HAP-1 (cell line): ENCODE measurements at regions of chr12 and their contacts with region 1.

Region 1: GRCh38 chr12:130871286-130872178 is at the start of gene RAN:
- DNase-seq: peak; percentile 87 to 93
- H3K4me3 ChIP-seq: peak within 1 kb of the TSS; percentile 63
- H3K4me1 ChIP-seq: peaks cover 25% of the 10 kb centered on the region
- H3K27me3 ChIP-seq: no peaks in the 10 kb centered on the region

Region 2: GRCh38 chr12:130537052-130537451 is 334.5 kb before region 1 on chr12:
- in situ Hi-C with region 1: no loop called
- DNase-seq: no peak
- H3K4me3 ChIP-seq: no peak overlapping the region
- H3K4me1 ChIP-seq: no peaks in the 10 kb centered on the region
- H3K27me3 ChIP-seq: no peaks in the 10 kb centered on the region

Region 3: DNA sequence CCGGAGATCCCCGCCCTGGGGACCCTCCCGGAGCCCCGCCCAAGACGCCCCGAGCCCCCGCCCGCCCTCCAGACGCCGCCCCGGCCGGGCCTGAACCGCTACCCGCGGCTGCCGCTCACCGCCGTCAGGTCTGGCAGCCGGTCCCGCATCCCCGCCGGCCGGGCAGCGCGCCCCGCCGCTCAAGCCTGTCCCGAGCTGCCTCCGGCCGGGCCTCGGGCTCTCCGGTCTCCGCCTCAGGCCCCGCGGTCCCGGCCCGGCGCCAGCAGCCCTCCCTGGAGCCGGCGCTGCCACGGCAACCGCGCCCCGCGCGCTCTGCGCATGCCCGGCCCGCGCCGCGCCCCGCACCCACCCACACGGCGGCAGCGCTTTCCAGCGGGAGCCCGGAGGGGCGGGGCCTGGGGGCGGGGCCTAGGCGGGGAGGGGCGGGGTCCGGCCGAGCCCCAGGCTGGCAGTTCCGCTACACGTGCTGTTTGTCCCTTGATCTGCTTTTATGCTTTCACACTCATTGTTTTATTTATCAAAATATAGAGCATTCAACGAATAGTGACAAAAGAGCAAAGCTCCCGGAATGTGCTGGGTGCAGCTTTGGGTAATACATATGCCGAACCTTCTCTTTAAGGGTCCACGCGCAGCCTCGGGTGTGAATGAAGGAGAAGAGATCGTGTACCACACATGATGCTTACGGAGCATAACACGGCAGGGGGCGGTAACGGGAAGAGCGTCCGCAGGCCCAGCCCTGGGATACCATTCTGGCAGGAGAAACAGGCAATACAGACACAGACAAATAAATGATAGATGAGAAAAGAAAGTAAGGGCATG is 32.4 kb before region 1 on chr12 and contains the start of gene STX2:
- in situ Hi-C with region 1: loop called (anchors 5 kb)
- DNase-seq: peak; percentile 72 to 89
- H3K4me3 ChIP-seq: peak within 1 kb of the TSS; percentile 67
- H3K4me1 ChIP-seq: peaks cover 9% of the 10 kb centered on the region
- H3K27me3 ChIP-seq: no peaks in the 10 kb centered on the region

Region 4: GRCh38 chr12:131028615-131029338 is 157.2 kb after region 1 on chr12:
- in situ Hi-C with region 1: no loop called
- DNase-seq: no peak
- H3K4me3 ChIP-seq: no peak overlapping the region
- H3K4me1 ChIP-seq: no peaks in the 10 kb centered on the region
- H3K27me3 ChIP-seq: no peaks in the 10 kb centered on the region